ENCODE measurements at regions of chr4 and their contacts with region 1.

Region 1: GRCh38 chr4:119041951-119042560 is 93.6 kb upstream of the MYOZ2 start:
- DNase-seq: peak in 1 of 2 donors; percentile 85
- ATAC-seq: peak; percentile 80 to 89 (median 88)
- H3K4me3 ChIP-seq: no peak overlapping the region
- H3K4me3 Mint-ChIP-seq: no peak overlapping the region
- H3K27ac ChIP-seq: no peak overlapping the region
- H3K27ac Mint-ChIP-seq: no peak overlapping the region
- H3K4me1 ChIP-seq: peaks cover 3% of the 10 kb centered on the region
- H3K4me1 Mint-ChIP-seq: no peaks in the 10 kb centered on the region
- H3K27me3 ChIP-seq: no peaks in the 10 kb centered on the region
- H3K27me3 Mint-ChIP-seq: peaks cover 0 to 2% of the 10 kb centered on the region in 2 donors
- CTCF ChIP-seq: peak; percentile 71

Region 2: DNA sequence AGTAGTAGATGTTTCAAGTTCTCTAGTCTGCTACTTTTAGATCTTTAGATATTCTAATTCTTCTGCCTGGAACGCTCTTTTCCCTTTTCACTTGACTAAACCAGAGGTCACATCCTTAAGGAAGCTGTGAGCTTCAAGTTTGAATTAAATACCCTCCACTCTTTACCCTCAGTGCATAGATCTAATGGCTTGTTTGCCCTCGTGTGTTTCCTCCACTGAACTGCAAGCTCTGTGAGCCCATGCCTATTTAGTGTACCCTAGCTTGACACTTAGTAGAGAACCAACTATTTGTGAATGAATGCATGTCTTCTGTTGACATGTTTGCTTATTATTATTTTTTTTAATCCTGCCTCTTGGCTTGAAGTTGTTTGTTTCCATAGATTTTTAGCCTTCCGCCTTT is 448.3 kb after region 1 on chr4:
- intact Hi-C with region 1: loop called (anchors 10 kb)
- DNase-seq: peak in 1 of 2 donors; percentile 6
- ATAC-seq: no peak
- H3K4me3 ChIP-seq: no peak overlapping the region
- H3K4me3 Mint-ChIP-seq: no peak overlapping the region
- H3K27ac ChIP-seq: no peak overlapping the region
- H3K27ac Mint-ChIP-seq: no peak overlapping the region
- H3K4me1 ChIP-seq: no peaks in the 10 kb centered on the region
- H3K4me1 Mint-ChIP-seq: no peaks in the 10 kb centered on the region
- H3K27me3 ChIP-seq: no peaks in the 10 kb centered on the region
- H3K27me3 Mint-ChIP-seq: no peaks in the 10 kb centered on the region
- CTCF ChIP-seq: no peak